ENCODE measurements at regions of chr9 and their contacts with region 1.

Region 1: GRCh38 chr9:127166651-127167524 is 44.5 kb upstream of the ANGPTL2 start:
- DNase-seq: peak; percentile 40
- H3K4me3 ChIP-seq: no peak overlapping the region
- H3K27ac ChIP-seq: no peak overlapping the region
- H3K4me1 ChIP-seq: peaks cover 18% of the 10 kb centered on the region
- H3K27me3 ChIP-seq: no peaks in the 10 kb centered on the region
- CTCF ChIP-seq: no peak

Region 2: DNA sequence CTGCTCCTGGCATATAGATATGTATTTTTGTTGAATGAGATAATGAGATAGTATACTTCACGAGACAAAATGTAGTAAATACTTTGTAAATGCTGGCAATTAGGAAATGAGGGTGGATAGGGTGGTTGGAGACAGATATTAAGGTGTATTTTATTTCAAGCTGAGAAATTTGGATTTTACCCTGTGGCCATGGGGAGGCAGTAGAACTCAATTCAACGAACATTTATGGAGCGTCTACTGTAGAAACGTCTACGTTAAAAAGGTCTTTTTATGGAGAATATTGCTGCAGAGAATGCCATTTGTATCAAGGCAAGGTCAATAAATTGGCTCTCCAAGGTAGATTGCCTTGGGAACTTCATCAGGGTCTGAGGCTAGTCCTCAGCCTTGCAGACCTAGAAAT is 273.8 kb before region 1 on chr9:
- CTCF ChIA-PET with region 1: interaction called, 12 read pairs
- POLR2A ChIA-PET with region 1: no interaction called
- intact Hi-C with region 1: no loop called
- DNase-seq: peak; percentile 32
- H3K4me3 ChIP-seq: no peak overlapping the region
- H3K27ac ChIP-seq: no peak overlapping the region
- H3K4me1 ChIP-seq: no peaks in the 10 kb centered on the region
- H3K27me3 ChIP-seq: no peaks in the 10 kb centered on the region
- CTCF ChIP-seq: peak; percentile 61

Region 3: GRCh38 chr9:127096208-127096607 is 70.7 kb before region 1 on chr9:
- CTCF ChIA-PET with region 1: no interaction called
- POLR2A ChIA-PET with region 1: no interaction called
- intact Hi-C with region 1: no loop called
- DNase-seq: no peak
- H3K4me3 ChIP-seq: no peak overlapping the region
- H3K27ac ChIP-seq: no peak overlapping the region
- H3K4me1 ChIP-seq: no peaks in the 10 kb centered on the region
- H3K27me3 ChIP-seq: no peaks in the 10 kb centered on the region
- CTCF ChIP-seq: no peak

Region 4: GRCh38 chr9:128438343-128439109 is 1271.6 kb after region 1 on chr9:
- CTCF ChIA-PET with region 1: no interaction called
- POLR2A ChIA-PET with region 1: no interaction called
- intact Hi-C with region 1: no loop called
- DNase-seq: peak; percentile 89
- H3K4me3 ChIP-seq: no peak overlapping the region
- H3K27ac ChIP-seq: no peak overlapping the region
- H3K4me1 ChIP-seq: peaks cover 3% of the 10 kb centered on the region
- H3K27me3 ChIP-seq: no peaks in the 10 kb centered on the region
- CTCF ChIP-seq: peak; percentile 97